Mammary epithelial cell (primary cell): ENCODE measurements at regions of chr7 and their contacts with region 1.

Region 1: DNA sequence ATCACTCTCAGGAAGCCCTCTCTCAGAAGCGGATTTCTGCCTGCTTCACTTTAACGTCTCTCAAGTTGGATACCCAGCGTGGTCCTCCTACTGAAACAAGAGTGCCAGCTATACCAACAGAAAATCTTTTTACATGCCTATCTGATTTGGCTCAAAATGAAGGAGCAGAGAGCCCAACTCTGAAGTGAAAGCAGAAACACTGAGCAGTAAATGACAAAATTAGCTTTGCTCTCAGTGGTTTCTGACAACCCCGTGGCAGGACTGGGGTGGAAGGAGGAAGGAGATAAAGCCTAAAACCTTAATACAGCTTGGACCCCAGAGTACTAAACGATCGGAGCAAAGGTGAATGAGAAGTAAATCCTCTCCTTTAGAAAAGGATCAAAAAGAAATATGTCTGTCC is 25.1 kb upstream of the GPR37 start:
- DNase-seq: no peak
- H3K4me3 ChIP-seq: no peak overlapping the region
- H3K27ac ChIP-seq: no peak overlapping the region
- H3K4me1 ChIP-seq: no peaks in the 10 kb centered on the region
- H3K27me3 ChIP-seq: peaks cover 2% of the 10 kb centered on the region
- CTCF ChIP-seq: no peak

Region 2: GRCh38 chr7:124162667-124163066 is 628.0 kb before region 1 on chr7:
- CTCF ChIA-PET with region 1: no interaction called
- dilution Hi-C with region 1: loop called (anchors 25 kb)
- in situ Hi-C with region 1: loop called (anchors 10 kb)
- intact Hi-C with region 1: no loop called
- DNase-seq: no peak
- H3K4me3 ChIP-seq: no peak overlapping the region
- H3K27ac ChIP-seq: no peak overlapping the region
- H3K4me1 ChIP-seq: no peaks in the 10 kb centered on the region
- H3K27me3 ChIP-seq: peaks cover 3% of the 10 kb centered on the region
- CTCF ChIP-seq: no peak

Region 3: GRCh38 chr7:124701955-124702354 is 88.7 kb before region 1 on chr7:
- CTCF ChIA-PET with region 1: no interaction called
- dilution Hi-C with region 1: no loop called
- in situ Hi-C with region 1: no loop called
- intact Hi-C with region 1: no loop called
- DNase-seq: peak; percentile 74
- H3K4me3 ChIP-seq: no peak overlapping the region
- H3K27ac ChIP-seq: no peak overlapping the region
- H3K4me1 ChIP-seq: peaks cover 8% of the 10 kb centered on the region
- H3K27me3 ChIP-seq: no peaks in the 10 kb centered on the region
- CTCF ChIP-seq: no peak